Transverse colon (tissue), 4 donors: ENCODE measurements at regions of chr14 and their contacts with region 1.

Region 1: DNA sequence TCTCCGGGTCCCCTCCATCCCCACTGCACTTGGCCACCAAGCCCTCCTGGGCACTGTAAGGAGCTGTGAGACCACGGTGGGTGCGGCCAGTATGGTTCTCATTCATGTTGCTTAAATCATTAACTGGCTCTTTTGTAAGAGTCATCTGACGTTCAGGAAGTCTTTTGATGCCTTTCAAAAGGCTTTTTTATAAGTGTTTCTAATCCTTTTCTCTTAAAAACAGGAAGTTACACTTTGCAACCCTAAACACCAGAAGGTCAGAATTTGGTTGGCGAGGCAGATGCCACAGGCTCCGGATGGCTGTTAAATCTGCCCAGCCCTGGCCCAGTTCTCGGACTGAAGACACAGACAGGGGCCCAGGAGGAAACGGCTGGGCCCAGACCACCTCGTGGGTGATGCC is 26.1 kb upstream of the DIO3 start:
- DNase-seq: peak; percentile 27
- H3K4me3 ChIP-seq: no peak overlapping the region
- H3K27ac ChIP-seq: no peak overlapping the region
- H3K4me1 ChIP-seq: peaks cover 0 to 9% (median 0%) of the 10 kb centered on the region in 4 donors
- H3K27me3 ChIP-seq: no peaks in the 10 kb centered on the region
- CTCF ChIP-seq: no peak
- EP300 ChIP-seq: no peak
- POLR2A ChIP-seq: no peak

Region 2: GRCh38 chr14:100955201-100955600 is 580.0 kb before region 1 on chr14:
- in situ Hi-C with region 1: no loop called
- intact Hi-C with region 1: no loop called
- DNase-seq: no peak
- H3K4me3 ChIP-seq: no peak overlapping the region
- H3K27ac ChIP-seq: no peak overlapping the region
- H3K4me1 ChIP-seq: no peaks in the 10 kb centered on the region
- H3K27me3 ChIP-seq: no peaks in the 10 kb centered on the region
- CTCF ChIP-seq: no peak
- EP300 ChIP-seq: no peak
- POLR2A ChIP-seq: no peak

Region 3: DNA sequence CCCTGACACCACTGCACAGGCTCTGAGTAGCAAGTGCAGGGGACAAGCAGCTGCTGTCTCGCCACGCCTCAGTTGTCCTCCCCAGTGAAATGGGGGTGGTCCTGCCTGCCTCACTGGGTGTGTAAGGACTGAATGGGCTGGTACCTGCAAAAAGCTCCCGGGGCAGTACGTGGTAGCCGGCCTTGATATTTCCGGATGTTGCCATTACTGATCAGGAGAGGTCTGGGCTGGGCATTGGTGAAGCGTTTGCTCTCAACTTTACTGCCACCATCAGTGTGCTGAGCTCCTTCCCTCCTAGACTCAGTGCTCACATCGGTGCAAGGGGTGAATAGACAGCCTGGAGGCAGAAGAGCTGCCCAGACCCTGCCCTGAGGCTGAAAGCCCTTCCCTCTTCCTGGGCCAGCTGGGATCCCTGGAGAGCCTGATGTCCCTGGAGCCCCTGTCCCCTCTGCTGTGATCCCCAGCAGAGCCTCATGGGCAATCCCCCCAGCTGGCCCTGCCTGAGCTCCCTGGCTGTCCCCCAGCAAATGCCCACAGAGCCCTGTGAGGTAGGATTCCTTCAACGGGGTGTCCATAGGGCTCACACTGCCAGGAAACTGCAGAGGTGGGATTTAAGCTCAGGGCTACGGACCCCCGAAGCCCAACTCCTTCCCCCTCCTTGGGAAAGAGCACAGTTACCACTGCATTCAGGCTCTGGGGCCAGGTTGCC is 44.3 kb after region 1 on chr14:
- in situ Hi-C with region 1: no loop called
- intact Hi-C with region 1: loop called (anchors 1 kb)
- DNase-seq: no peak
- H3K4me3 ChIP-seq: no peak overlapping the region
- H3K27ac ChIP-seq: no peak overlapping the region
- H3K4me1 ChIP-seq: no peaks in the 10 kb centered on the region
- H3K27me3 ChIP-seq: peaks cover 3% of the 10 kb centered on the region
- CTCF ChIP-seq: no peak
- EP300 ChIP-seq: no peak
- POLR2A ChIP-seq: no peak